Left ventricle myocardium superior (tissue), 1 donor: ENCODE measurements at regions of chr12 and their contacts with region 1.

Region 1: DNA sequence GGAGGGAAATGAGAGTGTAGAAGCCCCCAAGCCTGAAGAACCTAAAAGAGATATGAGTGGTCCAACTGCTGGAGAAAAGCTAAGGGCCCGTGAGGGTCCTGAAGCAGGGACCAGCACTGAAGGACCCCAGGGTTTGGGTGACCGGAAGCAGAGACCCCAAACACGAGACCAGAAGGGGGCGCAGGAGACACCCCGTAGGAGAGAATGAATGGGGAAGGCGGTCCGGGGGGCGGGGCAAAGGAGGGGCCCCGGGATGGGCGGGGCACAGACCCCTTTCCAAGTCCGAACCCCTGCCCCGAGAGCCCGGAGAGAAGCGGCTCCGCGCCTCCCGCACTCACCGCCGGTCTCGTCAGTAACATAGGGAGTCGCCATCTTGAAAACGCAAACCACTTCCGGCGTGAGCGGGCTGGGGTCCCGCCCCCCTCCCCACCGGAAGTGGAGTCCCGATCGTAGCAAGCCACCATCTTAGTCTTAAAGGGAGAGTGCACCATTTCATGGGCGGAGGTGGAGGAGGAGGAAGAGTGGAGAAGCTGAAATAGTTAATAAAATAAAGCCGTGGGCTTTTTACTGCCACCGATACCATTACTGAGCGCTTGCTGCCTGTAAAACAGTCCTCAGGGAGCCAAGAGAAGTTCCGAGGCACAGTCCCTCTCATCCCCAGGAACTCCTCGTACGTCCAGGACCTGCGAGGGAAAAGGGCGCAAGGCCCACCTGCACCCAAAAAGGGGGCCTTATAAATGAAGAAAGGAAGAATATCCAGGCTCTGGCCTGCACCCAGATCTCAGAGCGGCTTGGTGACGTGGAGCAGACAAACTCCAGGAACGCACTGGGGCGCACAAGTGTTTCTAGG is 731 bp downstream of the PYM1 start:
- DNase-seq: peak; percentile 92
- ATAC-seq: peak; percentile 89

Region 2: GRCh38 chr12:55829967-55830600 is 96.9 kb before region 1 on chr12:
- intact Hi-C with region 1: loop called (anchors 10 kb)
- DNase-seq: peak; percentile 70
- ATAC-seq: peak; percentile 38